Activated naive CD4-positive, alpha-beta T cell treated with anti-CD3 and anti-CD28 coated beads for 36 hours (primary cell): ENCODE measurements at regions of chr17 and their contacts with region 1.

Region 1: DNA sequence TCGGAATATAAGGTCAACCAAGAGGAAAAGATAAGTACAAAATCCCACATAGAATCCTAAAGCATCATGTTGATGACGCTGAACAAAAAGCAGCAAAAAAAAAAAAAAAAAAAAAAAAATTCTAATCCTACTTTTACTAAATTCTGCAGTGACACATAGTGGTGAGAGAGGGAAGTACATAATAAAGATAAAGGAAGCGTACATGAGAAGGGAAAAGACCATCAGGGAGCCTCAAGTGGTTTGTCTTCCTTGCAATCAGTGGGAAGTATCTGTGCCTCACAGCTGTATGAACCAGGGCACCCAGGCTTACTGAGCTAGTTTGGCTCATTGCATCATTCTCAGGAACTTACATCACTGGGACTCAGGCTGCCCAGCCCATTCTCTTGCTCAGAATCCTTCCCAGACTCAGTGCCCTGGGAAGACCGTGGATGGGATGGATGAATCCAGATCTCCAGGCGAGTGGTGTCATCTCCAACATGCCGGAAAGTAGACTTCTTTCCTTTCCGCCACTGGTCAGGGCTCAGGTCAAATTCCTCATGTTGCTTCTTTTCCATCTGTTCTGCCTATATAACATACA is 21.2 kb downstream of the SMG6 start:
- DNase-seq: no peak
- H3K4me3 Mint-ChIP-seq: no peak overlapping the region
- H3K27ac Mint-ChIP-seq: peak overlapping the region; percentile 38
- H3K4me1 Mint-ChIP-seq: peaks cover 29% of the 10 kb centered on the region
- H3K27me3 Mint-ChIP-seq: no peaks in the 10 kb centered on the region

Region 2: DNA sequence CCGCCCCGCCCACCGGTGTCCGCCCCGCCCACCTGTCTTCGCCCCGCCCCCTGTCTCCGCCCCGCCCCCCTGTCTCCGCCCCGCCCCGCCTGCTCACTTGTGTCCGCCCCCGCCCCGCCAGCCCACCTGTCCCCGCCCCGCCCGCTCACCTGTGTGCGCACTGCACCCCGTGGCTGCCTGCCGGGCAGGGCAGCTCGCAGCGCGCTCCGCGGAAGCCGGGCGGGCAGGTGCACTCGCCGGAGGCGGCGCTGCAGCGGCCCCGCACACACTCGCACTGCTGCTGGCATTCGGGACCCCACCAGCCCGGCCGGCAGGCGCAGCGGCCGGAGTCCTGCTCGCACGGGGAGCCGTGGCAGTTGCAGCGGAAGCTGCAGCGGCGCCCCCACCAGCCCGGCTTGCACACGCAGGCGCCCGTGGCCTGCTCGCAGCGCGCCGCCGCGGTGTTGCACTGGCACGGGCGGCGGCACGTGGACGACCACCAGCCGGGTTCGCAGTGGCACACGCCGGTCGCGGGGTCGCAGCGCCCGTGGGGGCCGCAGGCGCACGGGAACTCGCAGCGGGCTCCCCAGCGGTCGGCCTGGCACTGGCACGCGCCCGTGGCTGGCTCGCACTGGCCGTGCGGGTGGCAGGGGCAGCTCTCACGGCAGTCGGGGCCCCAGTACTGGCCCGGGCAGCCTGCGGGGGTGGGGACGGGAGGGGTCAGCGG is 638.9 kb before region 1 on chr17:
- CTCF ChIA-PET with region 1: no interaction called
- intact Hi-C with region 1: no loop called
- DNase-seq: peak; percentile 45
- H3K4me3 Mint-ChIP-seq: no peak overlapping the region
- H3K27ac Mint-ChIP-seq: no peak overlapping the region
- H3K4me1 Mint-ChIP-seq: peaks cover 31% of the 10 kb centered on the region
- H3K27me3 Mint-ChIP-seq: no peaks in the 10 kb centered on the region

Region 3: DNA sequence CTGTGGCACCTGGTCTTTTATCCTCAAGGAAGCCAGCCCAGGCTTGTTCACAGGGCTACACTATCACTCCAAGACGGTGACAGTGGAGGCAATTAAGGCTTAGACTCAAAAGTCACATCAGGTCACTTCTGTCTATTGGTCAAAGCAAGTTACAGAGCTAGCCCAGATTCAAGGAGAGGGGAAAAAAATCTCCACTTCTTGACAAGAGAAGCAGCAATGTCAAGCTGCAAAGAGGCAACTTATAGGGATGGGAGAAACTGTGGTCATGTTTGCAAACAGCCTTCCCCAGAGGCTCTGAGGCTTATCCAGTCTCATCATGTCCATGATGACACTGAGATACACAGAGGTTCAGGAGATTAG is 489.0 kb before region 1 on chr17:
- CTCF ChIA-PET with region 1: no interaction called
- intact Hi-C with region 1: no loop called
- DNase-seq: no peak
- H3K4me3 Mint-ChIP-seq: no peak overlapping the region
- H3K27ac Mint-ChIP-seq: no peak overlapping the region
- H3K4me1 Mint-ChIP-seq: peaks cover 2% of the 10 kb centered on the region
- H3K27me3 Mint-ChIP-seq: no peaks in the 10 kb centered on the region

Region 4: DNA sequence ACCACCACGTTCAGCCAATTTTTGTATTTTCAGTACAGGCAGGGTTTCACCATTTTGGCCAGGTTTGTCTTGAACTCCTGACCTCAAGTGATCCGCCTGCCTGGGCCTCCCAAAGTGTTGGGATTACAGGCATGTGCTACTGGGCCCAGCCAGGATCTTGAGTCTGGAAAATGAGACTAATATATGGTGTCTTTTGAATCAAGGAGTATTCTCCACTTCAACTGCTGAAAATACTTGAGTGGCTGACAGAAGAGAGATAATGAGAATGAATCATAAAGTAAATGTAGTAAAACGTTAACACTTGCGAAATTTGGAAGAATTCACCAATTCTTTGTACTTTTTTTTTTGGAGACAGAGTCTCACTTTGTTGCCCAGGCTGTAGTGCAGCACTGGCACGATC is 469.3 kb before region 1 on chr17:
- CTCF ChIA-PET with region 1: no interaction called
- intact Hi-C with region 1: no loop called
- DNase-seq: no peak
- H3K4me3 Mint-ChIP-seq: no peak overlapping the region
- H3K27ac Mint-ChIP-seq: no peak overlapping the region
- H3K4me1 Mint-ChIP-seq: no peaks in the 10 kb centered on the region
- H3K27me3 Mint-ChIP-seq: no peaks in the 10 kb centered on the region

Region 5: GRCh38 chr17:2295575-2295974 is 13.2 kb after region 1 on chr17:
- CTCF ChIA-PET with region 1: interaction called, 10 read pairs
- intact Hi-C with region 1: no loop called
- DNase-seq: peak; percentile 38
- H3K4me3 Mint-ChIP-seq: no peak overlapping the region
- H3K27ac Mint-ChIP-seq: peak overlapping the region; percentile 2
- H3K4me1 Mint-ChIP-seq: peaks cover 41% of the 10 kb centered on the region
- H3K27me3 Mint-ChIP-seq: no peaks in the 10 kb centered on the region